ENCODE measurements at regions of chr13 and their contacts with region 1.

Region 1: GRCh38 chr13:40682449-40683240 is 16.2 kb upstream of the FOXO1 start:
- DNase-seq: peak; percentile 63
- H3K4me3 ChIP-seq: no peak overlapping the region
- H3K27ac ChIP-seq: peak overlapping the region; percentile 73
- H3K4me1 ChIP-seq: peaks cover 22% of the 10 kb centered on the region
- H3K27me3 ChIP-seq: no peaks in the 10 kb centered on the region
- CTCF ChIP-seq: peak; percentile 11 to 21
- POLR2A ChIP-seq: no peak

Region 2: DNA sequence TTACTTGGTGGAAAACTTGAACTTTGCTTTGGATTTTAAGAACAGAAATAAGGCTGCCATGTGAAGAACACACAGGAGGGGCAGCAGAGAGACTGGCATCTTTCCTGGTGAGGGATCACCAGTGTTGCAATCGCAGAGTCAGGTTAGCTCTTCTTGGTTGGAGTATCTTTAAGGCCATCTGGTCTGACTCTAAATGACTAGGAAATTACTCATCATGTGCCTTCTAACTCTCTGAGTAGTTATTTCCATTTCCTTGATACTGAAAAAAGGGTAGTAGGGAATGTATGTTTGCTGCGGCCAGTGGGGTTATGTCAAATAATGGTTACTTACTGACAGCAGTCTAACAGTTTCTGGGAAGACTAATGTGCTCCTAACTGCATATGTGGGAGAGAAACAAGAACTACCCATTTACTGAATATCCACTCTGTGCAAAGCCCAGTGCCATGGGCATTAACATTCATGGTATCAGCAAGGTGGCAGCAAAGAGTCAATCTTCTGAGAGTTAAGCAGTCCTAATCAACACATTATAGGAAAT is 905.1 kb before region 1 on chr13:
- CTCF ChIA-PET with region 1: interaction called, 47 read pairs
- POLR2A ChIA-PET with region 1: no interaction called
- dilution Hi-C with region 1: no loop called
- intact Hi-C with region 1: loop called (anchors 1 kb)
- DNase-seq: peak; percentile 88
- H3K4me3 ChIP-seq: no peak overlapping the region
- H3K27ac ChIP-seq: peak overlapping the region; percentile 99
- H3K4me1 ChIP-seq: peaks cover 59% of the 10 kb centered on the region
- H3K27me3 ChIP-seq: no peaks in the 10 kb centered on the region
- CTCF ChIP-seq: peak; percentile 51 to 52
- POLR2A ChIP-seq: no peak

Region 3: GRCh38 chr13:39942552-39943273 is 739.9 kb before region 1 on chr13:
- CTCF ChIA-PET with region 1: interaction called, 24 read pairs
- POLR2A ChIA-PET with region 1: no interaction called
- dilution Hi-C with region 1: no loop called
- intact Hi-C with region 1: loop called (anchors 1 kb)
- DNase-seq: peak; percentile 71
- H3K4me3 ChIP-seq: no peak overlapping the region
- H3K27ac ChIP-seq: no peak overlapping the region
- H3K4me1 ChIP-seq: peaks cover 3% of the 10 kb centered on the region
- H3K27me3 ChIP-seq: no peaks in the 10 kb centered on the region
- CTCF ChIP-seq: peak; percentile 86 to 94
- POLR2A ChIP-seq: no peak

Region 4: GRCh38 chr13:40082639-40083038 is 600.0 kb before region 1 on chr13:
- CTCF ChIA-PET with region 1: no interaction called
- POLR2A ChIA-PET with region 1: no interaction called
- dilution Hi-C with region 1: no loop called
- intact Hi-C with region 1: loop called (anchors 5 kb)
- DNase-seq: peak; percentile 99
- H3K4me3 ChIP-seq: no peak overlapping the region
- H3K27ac ChIP-seq: peak overlapping the region; percentile 71
- H3K4me1 ChIP-seq: peaks cover 11% of the 10 kb centered on the region
- H3K27me3 ChIP-seq: no peaks in the 10 kb centered on the region
- CTCF ChIP-seq: peak; percentile 30 to 62
- POLR2A ChIP-seq: no peak

Region 5: DNA sequence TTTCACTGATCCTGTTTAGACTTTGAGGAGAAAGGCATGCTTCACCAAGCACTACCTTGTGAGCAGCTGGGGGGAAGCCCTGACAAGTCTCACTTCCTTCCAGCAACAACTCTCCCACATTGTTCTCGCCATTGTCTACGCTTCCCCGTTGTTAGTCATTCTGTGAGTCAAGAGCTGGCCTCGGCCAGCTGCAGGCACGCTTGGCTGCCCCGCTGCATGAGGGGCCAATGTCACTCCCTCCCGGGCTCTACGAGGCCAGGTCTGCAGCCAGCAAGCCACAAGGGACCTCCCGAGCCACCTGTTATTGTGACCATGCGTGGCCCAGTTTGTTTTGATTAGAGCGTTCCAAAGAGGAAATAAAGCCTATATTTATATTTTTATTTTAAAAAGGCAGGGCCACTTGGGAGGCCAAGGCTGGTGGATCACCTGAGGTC is 237.1 kb before region 1 on chr13:
- CTCF ChIA-PET with region 1: no interaction called
- POLR2A ChIA-PET with region 1: no interaction called
- dilution Hi-C with region 1: no loop called
- intact Hi-C with region 1: loop called (anchors 1 kb)
- DNase-seq: peak; percentile 99
- H3K4me3 ChIP-seq: no peak overlapping the region
- H3K27ac ChIP-seq: peak overlapping the region; percentile 99
- H3K4me1 ChIP-seq: peaks cover 36% of the 10 kb centered on the region
- H3K27me3 ChIP-seq: no peaks in the 10 kb centered on the region
- CTCF ChIP-seq: no peak
- POLR2A ChIP-seq: peak; percentile 42

Region 6: DNA sequence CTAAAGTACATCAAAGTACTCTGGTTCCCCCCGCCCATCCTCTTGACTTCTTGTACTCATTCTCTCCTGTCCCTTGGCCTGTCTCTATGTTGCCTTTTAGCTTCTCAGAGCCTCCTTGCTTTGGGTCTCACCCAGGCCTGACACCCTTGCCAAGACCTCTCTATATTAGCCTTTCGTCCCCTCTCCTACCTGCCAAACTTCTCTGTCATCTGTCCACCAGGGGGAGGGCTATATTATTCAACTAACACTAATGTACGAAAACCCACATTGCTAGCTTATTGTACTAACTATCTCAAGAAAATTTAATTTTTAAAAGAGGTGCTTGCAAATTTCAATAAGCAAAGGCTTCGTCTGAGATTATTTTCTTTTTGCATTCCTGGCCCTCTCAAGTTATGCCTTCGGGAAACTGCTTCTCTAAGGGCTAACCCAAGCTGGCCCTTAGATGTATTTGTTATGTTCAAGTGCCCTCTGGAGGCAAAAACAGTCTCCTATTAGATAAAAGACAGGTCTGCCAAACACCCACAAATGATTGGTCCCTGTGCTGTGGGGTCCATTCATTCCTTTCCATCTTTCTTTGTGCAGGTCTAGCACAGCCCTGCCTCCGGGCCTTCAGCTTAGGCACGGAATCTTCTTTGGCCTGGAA is 94.6 kb after region 1 on chr13:
- CTCF ChIA-PET with region 1: interaction called, 7 read pairs
- POLR2A ChIA-PET with region 1: no interaction called
- dilution Hi-C with region 1: no loop called
- intact Hi-C with region 1: loop called (anchors 5 kb)
- DNase-seq: peak; percentile 70
- H3K4me3 ChIP-seq: no peak overlapping the region
- H3K27ac ChIP-seq: peak overlapping the region; percentile 27
- H3K4me1 ChIP-seq: peaks cover 9% of the 10 kb centered on the region
- H3K27me3 ChIP-seq: no peaks in the 10 kb centered on the region
- CTCF ChIP-seq: peak; percentile 45 to 55
- POLR2A ChIP-seq: no peak

Region 7: DNA sequence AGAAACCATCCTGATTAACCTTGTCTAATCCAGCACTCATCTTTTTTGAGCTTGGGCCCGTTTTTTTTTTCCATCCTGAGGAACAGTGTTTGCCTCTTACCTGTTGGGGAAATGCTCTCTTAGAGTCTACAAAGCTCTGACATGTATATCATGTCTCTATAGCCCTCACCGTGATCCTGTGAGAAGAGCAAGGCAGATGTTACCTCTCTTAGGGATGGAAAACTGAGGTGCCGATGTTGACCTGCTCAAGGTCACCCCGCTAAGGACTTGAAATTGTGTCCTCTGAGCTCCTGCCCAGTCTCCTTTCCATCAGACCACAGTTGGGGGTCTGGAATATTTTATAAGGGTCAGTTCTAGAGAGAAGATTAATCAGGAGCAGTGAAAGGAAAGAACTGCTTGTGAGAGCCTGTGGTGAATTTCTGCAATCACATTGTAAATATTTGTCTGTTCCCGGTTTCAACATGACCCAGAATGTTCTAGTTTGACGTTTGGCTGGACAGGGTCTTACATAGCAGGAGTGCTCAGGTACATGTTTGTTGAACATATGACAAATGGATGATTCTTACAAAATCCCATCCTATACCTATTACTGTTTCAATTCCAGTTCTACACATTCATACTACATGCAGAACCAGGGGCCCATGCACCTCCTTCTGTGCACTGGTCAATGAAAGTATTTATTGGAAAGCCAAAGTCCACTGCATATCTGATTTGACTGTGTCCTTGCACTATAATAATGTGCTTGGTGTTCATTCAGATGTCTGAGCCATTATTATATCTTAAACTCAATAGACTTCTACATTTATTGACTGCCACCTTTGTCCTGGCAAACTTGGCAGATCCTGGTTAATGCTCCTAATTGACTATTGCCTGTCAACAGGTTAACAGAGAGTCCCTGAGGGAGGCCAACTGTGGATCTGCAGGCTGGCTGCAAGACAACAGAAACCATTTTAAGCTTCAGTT is 118.9 kb after region 1 on chr13:
- CTCF ChIA-PET with region 1: no interaction called
- POLR2A ChIA-PET with region 1: no interaction called
- dilution Hi-C with region 1: no loop called
- intact Hi-C with region 1: no loop called
- DNase-seq: no peak
- H3K4me3 ChIP-seq: no peak overlapping the region
- H3K27ac ChIP-seq: no peak overlapping the region
- H3K4me1 ChIP-seq: no peaks in the 10 kb centered on the region
- H3K27me3 ChIP-seq: no peaks in the 10 kb centered on the region
- CTCF ChIP-seq: no peak
- POLR2A ChIP-seq: no peak